HepG2 (cell line): ENCODE measurements at regions of chr11 and their contacts with region 1.

Region 1: DNA sequence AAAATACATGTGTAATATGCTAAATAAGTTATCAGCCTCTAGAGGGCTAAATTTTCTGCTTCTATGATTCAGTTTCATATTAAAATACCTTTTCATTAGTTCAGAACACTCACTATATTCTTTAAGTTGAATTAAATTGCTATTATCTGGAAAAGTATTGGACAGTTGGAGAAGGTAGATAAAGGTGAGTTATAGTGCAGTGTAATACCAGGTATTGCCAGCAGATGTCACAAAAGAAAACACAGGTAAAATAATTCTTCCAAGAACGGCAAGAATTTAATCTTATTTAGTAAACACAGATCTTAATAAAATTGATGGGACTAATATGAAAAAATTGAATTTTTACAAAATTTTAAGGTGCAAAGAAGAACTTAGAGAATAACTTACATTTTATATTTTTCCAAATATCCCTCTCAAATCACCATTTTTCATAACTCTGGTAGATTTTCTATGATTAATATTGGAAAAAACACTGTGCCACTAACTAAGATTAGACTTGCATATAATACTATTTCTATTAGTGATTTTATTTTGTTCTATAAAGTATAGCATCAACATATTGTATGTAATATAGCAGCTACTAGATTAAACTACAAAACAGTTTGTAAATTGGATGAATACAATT is 1.7 kb upstream of the LRRC4C start:
- DNase-seq: peak; percentile 5
- ATAC-seq: no peak
- H3K4me3 ChIP-seq: no peak overlapping the region
- H3K27ac ChIP-seq: no peak overlapping the region
- H3K4me1 ChIP-seq: no peaks in the 10 kb centered on the region
- H3K27me3 ChIP-seq: no peaks in the 10 kb centered on the region
- CTCF ChIP-seq: peak; percentile 48; the same call in 1 of the 2 replicates
- EP300 ChIP-seq: no peak
- POLR2A ChIP-seq: no peak
- RAD21 ChIP-seq: no peak

Region 2: GRCh38 chr11:42524534-42525227 is 1063.5 kb after region 1 on chr11:
- CTCF ChIA-PET with region 1: interaction called, 29 read pairs
- POLR2A ChIA-PET with region 1: no interaction called
- in situ Hi-C with region 1: loop called (anchors 5 kb)
- intact Hi-C with region 1: no loop called
- DNase-seq: peak; percentile 41
- ATAC-seq: peak; percentile 97
- H3K4me3 ChIP-seq: no peak overlapping the region
- H3K27ac ChIP-seq: no peak overlapping the region
- H3K4me1 ChIP-seq: no peaks in the 10 kb centered on the region
- H3K27me3 ChIP-seq: no peaks in the 10 kb centered on the region
- CTCF ChIP-seq: peak; percentile 86
- EP300 ChIP-seq: no peak
- POLR2A ChIP-seq: no peak
- RAD21 ChIP-seq: peak; percentile 57

Region 3: DNA sequence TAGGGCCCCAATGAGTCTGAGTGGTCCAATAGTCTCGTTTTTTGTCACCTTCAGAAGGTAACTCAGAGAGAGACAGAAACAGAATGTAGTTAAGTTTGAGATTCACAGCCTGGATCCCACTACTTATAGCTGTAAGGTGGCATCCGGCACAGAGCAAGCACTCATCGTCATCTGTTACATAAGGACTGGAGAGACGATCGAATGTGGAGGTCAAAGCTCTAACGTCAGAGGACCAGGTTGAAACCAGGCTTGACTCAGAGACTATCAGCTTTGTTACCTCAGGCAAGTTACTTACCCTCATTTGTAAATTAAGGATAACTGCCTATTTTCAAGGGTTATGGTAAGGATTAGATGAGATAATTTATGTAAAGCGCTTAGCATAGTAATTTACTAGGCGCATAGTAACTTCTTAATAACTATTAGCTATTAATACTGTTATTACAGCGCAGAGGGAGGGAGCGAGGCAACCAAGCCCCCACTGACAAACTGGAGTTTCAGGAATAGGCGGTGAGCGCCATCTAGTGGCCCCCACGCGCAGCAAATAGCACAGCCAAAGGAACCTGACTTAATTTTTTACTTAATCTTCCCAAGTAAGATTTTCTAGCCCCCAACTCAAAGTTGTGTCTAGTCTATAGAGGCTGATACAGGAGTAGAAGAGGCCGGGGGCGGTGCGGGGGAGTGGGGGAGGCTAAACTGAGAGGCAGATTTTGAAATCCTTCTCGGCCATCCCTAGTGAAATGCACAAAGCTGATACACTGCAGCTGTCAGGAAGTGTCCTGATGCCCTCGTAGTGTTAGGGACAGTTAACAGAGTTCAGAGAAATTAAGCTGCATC is 1821.7 kb after region 1 on chr11:
- CTCF ChIA-PET with region 1: interaction called, 3 read pairs
- POLR2A ChIA-PET with region 1: no interaction called
- in situ Hi-C with region 1: loop called (anchors 25 kb)
- intact Hi-C with region 1: no loop called
- DNase-seq: peak; percentile 9
- ATAC-seq: peak; percentile 83
- H3K4me3 ChIP-seq: no peak overlapping the region; a peak in 1 of 6 replicates
- H3K27ac ChIP-seq: no peak overlapping the region
- H3K4me1 ChIP-seq: peaks cover 6% of the 10 kb centered on the region; the same call in 1 of the 2 replicates
- H3K27me3 ChIP-seq: peaks cover 0 to 2% of the 10 kb centered on the region in 2 experiments; a peak in 1 of 5 replicates
- CTCF ChIP-seq: peak; percentile 80
- EP300 ChIP-seq: no peak
- POLR2A ChIP-seq: no peak
- RAD21 ChIP-seq: peak; percentile 42; the same call in 1 of the 2 replicates